Activated naive CD4-positive, alpha-beta T cell treated with anti-CD3 and anti-CD28 coated beads for 36 hours (primary cell): ENCODE measurements at regions of chr4 and their contacts with region 1.

Region 1: DNA sequence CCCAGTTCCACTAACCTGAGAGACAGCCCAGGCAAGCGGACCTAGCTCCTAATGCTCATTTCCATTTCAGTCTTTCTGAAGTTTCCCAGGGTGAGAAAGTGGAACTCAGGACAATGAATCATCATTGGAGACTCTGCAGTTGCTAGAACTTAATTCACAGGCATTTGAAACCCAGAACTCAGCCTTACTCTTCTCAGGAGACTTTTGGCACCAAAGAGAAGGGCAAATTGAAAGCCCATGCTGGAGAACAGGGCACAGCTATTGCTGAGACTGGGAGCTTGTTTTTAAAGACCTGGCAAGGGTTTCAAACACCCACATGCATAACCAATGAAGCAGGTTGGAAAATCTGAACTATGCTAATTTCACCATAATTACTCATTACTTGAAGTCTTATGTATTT is 36.0 kb downstream of the BST1 start:
- DNase-seq: peak; percentile 25
- H3K4me3 Mint-ChIP-seq: no peak overlapping the region
- H3K27ac Mint-ChIP-seq: no peak overlapping the region
- H3K4me1 Mint-ChIP-seq: peaks cover 44% of the 10 kb centered on the region
- H3K27me3 Mint-ChIP-seq: no peaks in the 10 kb centered on the region

Region 2: GRCh38 chr4:15765910-15766697 is 27.2 kb after region 1 on chr4:
- CTCF ChIA-PET with region 1: interaction called, 10 read pairs
- intact Hi-C with region 1: loop called (anchors 1 kb)
- DNase-seq: peak; percentile 75
- H3K4me3 Mint-ChIP-seq: no peak overlapping the region
- H3K27ac Mint-ChIP-seq: peak overlapping the region; percentile 50
- H3K4me1 Mint-ChIP-seq: peaks cover 56% of the 10 kb centered on the region
- H3K27me3 Mint-ChIP-seq: no peaks in the 10 kb centered on the region

Region 3: DNA sequence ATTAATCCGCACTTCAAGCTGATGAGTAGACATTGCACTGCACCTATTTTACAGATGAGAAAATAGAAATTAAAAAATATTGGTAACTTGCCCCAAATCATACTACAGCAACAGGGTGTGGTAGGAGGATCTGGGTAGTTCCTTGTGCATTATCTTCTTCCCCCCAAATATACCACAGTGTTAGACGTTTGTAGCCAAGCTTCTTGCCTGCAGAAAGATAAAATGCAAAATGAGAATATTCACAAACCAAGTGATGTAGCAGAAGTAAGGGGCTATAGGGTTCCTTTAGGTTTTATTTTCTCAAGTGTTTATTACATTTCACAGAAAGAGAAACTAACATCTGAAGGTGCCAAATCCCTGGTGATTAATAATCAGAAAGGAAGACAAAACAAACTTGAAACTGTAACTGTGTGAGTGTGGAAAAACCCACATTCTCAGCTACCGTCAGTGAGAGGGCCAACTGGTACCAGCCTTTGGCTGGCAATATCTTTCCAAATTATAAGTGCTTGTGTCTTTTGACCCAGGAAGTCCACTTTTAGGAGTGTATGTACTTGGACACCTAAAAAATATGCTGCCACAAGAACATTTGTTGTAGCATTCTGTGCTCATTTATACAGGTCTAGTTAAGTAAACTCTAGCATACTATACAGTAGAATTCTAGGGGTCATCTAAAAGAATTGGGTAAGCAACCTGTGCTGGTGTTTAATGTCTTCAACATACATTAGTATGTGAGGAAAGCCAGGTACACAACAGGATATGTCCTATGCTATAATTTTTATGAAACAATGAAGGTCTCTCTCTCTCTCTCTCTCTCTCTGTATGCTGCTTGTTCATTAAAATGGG is 32.6 kb after region 1 on chr4:
- CTCF ChIA-PET with region 1: interaction called, 10 read pairs
- intact Hi-C with region 1: loop called (anchors 1 kb)
- DNase-seq: peak; percentile 57
- H3K4me3 Mint-ChIP-seq: peak overlapping the region; percentile 41
- H3K27ac Mint-ChIP-seq: no peak overlapping the region
- H3K4me1 Mint-ChIP-seq: peaks cover 69% of the 10 kb centered on the region
- H3K27me3 Mint-ChIP-seq: peaks cover 8% of the 10 kb centered on the region

Region 4: GRCh38 chr4:15794905-15795304 is 56.0 kb after region 1 on chr4:
- CTCF ChIA-PET with region 1: interaction called, 3 read pairs
- intact Hi-C with region 1: loop called (anchors 1 kb)
- DNase-seq: no peak
- H3K4me3 Mint-ChIP-seq: peak overlapping the region; percentile 39
- H3K27ac Mint-ChIP-seq: peak overlapping the region; percentile 47
- H3K4me1 Mint-ChIP-seq: peaks cover 53% of the 10 kb centered on the region
- H3K27me3 Mint-ChIP-seq: no peaks in the 10 kb centered on the region